ENCODE measurements at regions of chr5 and their contacts with region 1.

Region 1: GRCh38 chr5:36089989-36090564 is 23.4 kb upstream of the UGT3A2 start:
- DNase-seq: peak in 1 of 2 experiments; percentile 37
- ATAC-seq: peak; percentile 66 to 77; a peak in 5 of 6 replicates
- H3K4me3 ChIP-seq: no peak overlapping the region
- H3K27ac ChIP-seq: no peak overlapping the region
- H3K4me1 ChIP-seq: no peaks in the 10 kb centered on the region
- CTCF ChIP-seq: no peak
- EP300 ChIP-seq: no peak
- POLR2A ChIP-seq: no peak
- RAD21 ChIP-seq: no peak

Region 2: GRCh38 chr5:35926389-35927051 is 163.6 kb before region 1 on chr5:
- CTCF ChIA-PET with region 1: no interaction called
- POLR2A ChIA-PET with region 1: no interaction called
- DNase-seq: peak; percentile 43 to 51
- ATAC-seq: peak; percentile 75 to 87; a peak in 5 of 6 replicates
- H3K4me3 ChIP-seq: no peak overlapping the region
- H3K27ac ChIP-seq: no peak overlapping the region
- H3K4me1 ChIP-seq: no peaks in the 10 kb centered on the region
- CTCF ChIP-seq: peak; percentile 79
- EP300 ChIP-seq: no peak
- POLR2A ChIP-seq: no peak
- RAD21 ChIP-seq: peak; percentile 82 to 86

Region 3: GRCh38 chr5:36079200-36079761 is 10.8 kb before region 1 on chr5:
- CTCF ChIA-PET with region 1: interaction called, 18 read pairs
- POLR2A ChIA-PET with region 1: no interaction called
- DNase-seq: peak; percentile 55 to 62
- ATAC-seq: peak; percentile 97 to 99
- H3K4me3 ChIP-seq: no peak overlapping the region
- H3K27ac ChIP-seq: no peak overlapping the region
- H3K4me1 ChIP-seq: no peaks in the 10 kb centered on the region
- CTCF ChIP-seq: peak; percentile 59
- EP300 ChIP-seq: no peak
- POLR2A ChIP-seq: no peak
- RAD21 ChIP-seq: peak; percentile 50 to 59; a peak in 4 of 5 replicates

Region 4: DNA sequence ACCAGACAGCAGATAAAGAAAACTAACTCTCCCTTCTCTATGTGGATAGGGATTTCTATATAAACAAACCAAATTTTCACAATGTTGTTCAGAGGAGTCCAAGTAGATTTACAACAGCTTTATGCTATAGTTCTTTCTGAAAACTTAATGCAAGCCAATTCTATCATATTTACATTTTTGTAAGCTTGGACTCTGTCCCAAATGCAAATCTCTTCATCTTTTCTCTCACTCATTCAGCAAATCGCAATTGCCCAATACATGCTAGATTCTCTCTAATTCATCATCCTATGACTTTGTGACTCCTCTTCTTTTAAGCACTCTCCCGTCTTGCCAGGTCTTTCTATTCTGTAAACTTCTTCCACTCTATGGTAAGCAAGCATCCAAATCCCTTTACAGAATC is 15.7 kb after region 1 on chr5:
- CTCF ChIA-PET with region 1: no interaction called
- POLR2A ChIA-PET with region 1: no interaction called
- DNase-seq: no peak
- ATAC-seq: no peak
- H3K4me3 ChIP-seq: no peak overlapping the region
- H3K27ac ChIP-seq: no peak overlapping the region
- H3K4me1 ChIP-seq: peaks cover 4% of the 10 kb centered on the region; the same call in 2 of the 3 replicates
- CTCF ChIP-seq: no peak
- EP300 ChIP-seq: no peak
- POLR2A ChIP-seq: no peak
- RAD21 ChIP-seq: no peak